HEK293 (cell line): ENCODE measurements at regions of chr19 and their contacts with region 1.

Region 1: DNA sequence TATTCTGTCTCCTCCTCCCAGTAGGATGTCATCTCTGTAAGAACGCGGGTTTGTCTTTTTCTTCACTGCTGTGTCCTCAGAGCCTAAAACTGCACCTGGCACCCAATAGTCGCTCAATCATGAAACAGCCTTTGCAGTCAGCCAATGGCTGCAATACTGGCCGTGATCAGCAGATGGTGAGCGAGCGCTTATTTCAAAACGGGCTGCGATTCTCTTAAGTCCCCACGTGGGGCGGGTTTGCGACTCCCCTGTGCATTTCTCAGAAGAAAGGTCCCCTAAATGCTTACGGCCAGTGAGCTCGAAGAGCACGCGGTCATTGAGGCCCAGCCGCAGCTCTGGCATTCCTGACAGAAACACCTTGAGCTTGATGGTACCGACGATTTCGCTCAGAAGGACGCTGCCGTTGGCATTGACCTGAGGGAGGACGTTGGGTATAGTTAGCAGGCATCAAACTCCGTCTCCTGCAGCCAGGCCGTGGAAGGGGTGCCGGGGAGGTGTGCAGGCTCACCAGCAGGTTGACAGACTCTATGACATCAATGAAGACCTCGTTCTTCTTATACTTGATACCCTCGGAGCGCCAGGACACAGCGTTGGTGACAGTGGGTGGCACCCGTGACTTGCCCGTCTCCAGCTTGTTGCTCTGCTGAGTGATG is 6.0 kb downstream of the AP1M2 start:
- H3K4me3 ChIP-seq: no peak overlapping the region
- H3K27ac ChIP-seq: no peak overlapping the region
- H3K4me1 ChIP-seq: no peaks in the 10 kb centered on the region
- CTCF ChIP-seq: peak; percentile 94

Region 2: GRCh38 chr19:10593820-10594637 is 12.9 kb after region 1 on chr19:
- CTCF ChIA-PET with region 1: interaction called, 15 read pairs
- POLR2A ChIA-PET with region 1: no interaction called
- H3K4me3 ChIP-seq: no peak overlapping the region
- H3K27ac ChIP-seq: no peak overlapping the region
- H3K4me1 ChIP-seq: no peaks in the 10 kb centered on the region
- CTCF ChIP-seq: no peak

Region 3: DNA sequence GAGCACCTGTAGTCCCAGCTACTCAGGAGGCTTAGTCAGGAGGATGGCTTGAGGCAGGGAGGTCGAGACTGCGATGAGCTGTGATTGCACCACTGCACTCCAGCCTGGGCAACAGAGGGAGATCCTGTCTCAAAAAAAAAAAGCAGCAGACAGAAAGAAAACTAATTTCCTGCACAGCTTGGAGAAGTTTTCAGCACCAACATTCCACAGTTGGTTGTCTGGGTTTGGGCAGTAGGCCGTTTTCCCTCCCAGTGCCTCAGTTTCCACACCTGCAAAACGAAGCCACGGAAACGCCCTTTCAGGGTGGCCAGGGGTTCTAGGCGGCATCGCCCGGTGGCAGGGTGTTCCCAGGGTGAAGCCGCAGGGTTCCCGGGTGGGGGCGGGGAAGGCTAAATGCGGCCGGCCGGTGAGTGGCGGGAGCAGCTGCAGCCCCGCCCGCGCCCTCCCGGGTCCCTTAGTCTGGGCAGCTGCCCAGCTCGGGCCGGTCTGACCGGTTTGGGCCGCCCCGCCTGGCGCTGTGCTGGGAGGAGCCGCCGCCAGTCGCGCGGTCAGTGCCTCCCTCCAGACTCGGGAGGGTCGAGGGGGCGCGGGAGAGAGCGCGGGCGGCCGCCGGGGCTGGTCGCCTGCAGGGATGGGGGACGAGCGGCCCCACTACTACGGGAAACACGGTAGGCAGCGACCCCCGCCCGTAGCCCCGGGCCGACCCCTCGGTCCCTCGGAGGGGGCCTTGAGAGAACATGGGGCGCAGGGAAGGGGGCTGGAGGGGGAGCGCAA is 44.1 kb after region 1 on chr19 and contains the start of gene SLC44A2:
- CTCF ChIA-PET with region 1: interaction called, 13 read pairs
- POLR2A ChIA-PET with region 1: interaction called, 4 read pairs
- H3K4me3 ChIP-seq: peak within 1 kb of the TSS; percentile 73
- H3K27ac ChIP-seq: peak within 1 kb of the TSS; percentile 24; the same call in 1 of the 2 replicates
- H3K4me1 ChIP-seq: no peaks in the 10 kb centered on the region; the same call in 1 of the 2 replicates
- CTCF ChIP-seq: peak; percentile 21; the same call in 1 of the 2 replicates

Region 4: GRCh38 chr19:10653715-10654492 is 72.8 kb after region 1 on chr19 and contains the start of gene ILF3:
- CTCF ChIA-PET with region 1: interaction called, 243 read pairs
- POLR2A ChIA-PET with region 1: no interaction called
- H3K4me3 ChIP-seq: peak within 1 kb of the TSS; percentile 61
- H3K27ac ChIP-seq: peak within 1 kb of the TSS; percentile 89
- H3K4me1 ChIP-seq: peaks cover 7% of the 10 kb centered on the region; the same call in 1 of the 2 replicates
- CTCF ChIP-seq: no peak